ENCODE measurements at regions of chr3 and their contacts with region 1.

Region 1: DNA sequence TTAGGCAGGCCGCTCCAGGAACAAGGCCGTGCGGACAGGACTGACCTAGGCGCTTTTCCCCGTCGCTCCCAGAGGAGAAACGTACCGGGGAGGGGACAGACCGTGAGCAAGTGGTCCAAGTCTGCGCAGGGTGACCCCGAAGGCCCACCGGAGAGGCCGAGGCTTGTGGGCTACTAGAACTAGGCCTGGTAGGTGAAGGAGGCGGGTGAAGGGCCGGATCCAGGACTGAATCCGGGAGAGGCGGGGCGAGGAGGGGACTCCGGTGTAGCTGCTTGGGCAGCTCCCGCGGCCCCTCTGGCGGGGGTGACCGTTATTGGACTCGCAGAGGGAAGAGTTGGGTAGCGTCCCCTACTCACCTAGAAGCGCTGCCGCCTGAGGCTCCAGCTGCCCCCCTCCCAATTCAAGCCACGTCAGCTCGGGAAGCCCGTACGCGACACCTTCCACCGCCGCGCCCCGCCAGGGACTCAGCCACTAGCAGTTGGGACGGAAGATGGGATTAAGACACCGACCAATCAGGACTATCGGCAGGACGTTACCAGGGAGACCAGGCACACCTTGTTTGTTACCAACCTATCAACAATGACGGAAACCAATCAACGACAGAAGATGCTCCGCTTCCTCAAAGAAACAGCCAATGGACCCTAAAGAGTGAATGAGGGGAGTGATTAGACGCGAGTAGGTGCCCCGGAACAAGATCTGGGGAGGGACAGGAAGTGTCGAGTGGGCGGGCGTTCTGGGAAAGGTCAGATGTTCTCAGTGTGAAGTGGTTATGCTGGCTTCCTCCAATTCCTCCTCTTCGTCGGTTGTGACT is at the start of gene GOLGB1:
- DNase-seq: peak; percentile 92 to 96 (median 94)
- ATAC-seq: peak; percentile 99
- H3K4me3 ChIP-seq: peak within 1 kb of the TSS; percentile 68 to 95 (median 86)
- H3K27ac ChIP-seq: peak within 1 kb of the TSS; percentile 81 to 96 (median 92)
- H3K4me1 ChIP-seq: peaks cover 0 to 49% (median 36%) of the 10 kb centered on the region in 12 donors
- H3K27me3 ChIP-seq: no peaks in the 10 kb centered on the region
- CTCF ChIP-seq: peak in 2 of 12 donors; percentile 6 to 18
- POLR2A ChIP-seq: peak; percentile 75 to 99
- total RNA-seq, gene GOLGB1: 28.5 to 90.9 (median 44.9) TPM

Region 2: GRCh38 chr3:121630355-121630754 is 119.1 kb before region 1 on chr3:
- intact Hi-C with region 1: loop called in 1 of 10 experiments (anchors 1 kb)
- DNase-seq: no peak
- ATAC-seq: no peak
- H3K4me3 ChIP-seq: no peak overlapping the region
- H3K27ac ChIP-seq: peak overlapping the region in 5 of 12 donors; percentile 6 to 70 (median 62)
- H3K4me1 ChIP-seq: peaks cover 0 to 31% (median 7%) of the 10 kb centered on the region in 12 donors
- H3K27me3 ChIP-seq: no peaks in the 10 kb centered on the region
- CTCF ChIP-seq: no peak
- POLR2A ChIP-seq: no peak

Region 3: DNA sequence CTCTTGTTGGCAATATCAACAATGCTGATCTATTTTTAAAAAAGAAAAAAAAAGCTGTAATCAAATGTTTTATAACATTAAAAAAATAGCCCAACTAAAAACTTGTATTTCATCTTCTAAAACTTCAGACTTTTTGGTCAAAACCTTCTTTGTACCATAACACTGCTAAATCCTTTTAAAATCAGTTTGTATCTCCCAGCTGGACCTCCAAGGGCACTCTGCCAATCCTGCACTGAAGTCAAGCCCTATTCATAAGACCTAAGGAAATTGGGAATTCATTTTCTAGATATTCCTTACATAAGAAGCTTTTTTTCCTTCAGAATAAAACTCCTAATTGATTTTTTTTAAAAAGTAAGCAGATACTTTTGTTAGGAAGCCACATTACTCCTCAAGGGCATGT is 50.6 kb before region 1 on chr3:
- intact Hi-C with region 1: no loop called
- DNase-seq: peak in 3 of 5 donors; percentile 22 to 41 (median 25)
- ATAC-seq: peak in 1 of 4 donors; percentile 20
- H3K4me3 ChIP-seq: no peak overlapping the region
- H3K27ac ChIP-seq: peak overlapping the region in 9 of 12 donors; percentile 6 to 67 (median 43)
- H3K4me1 ChIP-seq: peaks cover 0 to 45% (median 24%) of the 10 kb centered on the region in 12 donors
- H3K27me3 ChIP-seq: no peaks in the 10 kb centered on the region
- CTCF ChIP-seq: no peak
- POLR2A ChIP-seq: no peak

Region 4: DNA sequence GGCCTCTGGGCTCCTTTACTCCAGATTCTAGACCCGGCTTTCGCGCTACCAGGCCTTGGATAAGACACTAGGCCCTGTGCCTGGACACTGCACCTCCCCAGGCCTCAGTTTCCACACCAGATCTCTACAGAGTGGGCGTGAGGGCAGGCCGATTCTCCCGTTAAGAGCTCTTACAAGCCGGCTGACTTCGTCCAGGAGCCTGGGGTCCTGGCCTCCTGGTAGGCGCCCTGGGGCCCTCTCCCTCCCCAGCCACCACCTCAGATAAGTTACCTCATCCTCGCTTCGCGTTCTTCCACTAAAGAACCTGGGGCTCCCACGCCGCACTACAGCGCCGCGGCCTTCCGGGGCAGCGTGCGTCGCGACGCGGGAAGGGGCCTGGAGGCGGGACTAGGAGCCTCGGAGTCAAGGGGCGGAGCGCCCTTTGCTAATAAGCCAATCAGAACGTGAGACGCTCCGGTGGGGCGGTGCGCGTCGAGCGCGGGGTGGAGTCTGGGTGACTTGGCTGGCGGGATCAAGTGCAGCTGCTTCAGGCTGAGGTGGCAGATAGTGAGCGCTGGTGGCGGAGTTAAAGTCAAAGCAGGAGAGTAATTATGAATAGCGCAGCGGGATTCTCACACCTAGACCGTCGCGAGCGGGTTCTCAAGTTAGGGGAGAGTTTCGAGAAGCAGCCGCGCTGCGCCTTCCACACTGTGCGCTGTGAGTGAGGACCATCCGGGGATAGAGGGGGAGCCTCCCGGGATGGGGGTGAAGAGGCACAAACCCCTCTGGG is 85.4 kb after region 1 on chr3 and contains the starts of genes EAF2 and IQCB1:
- intact Hi-C with region 1: loop called in 1 of 10 experiments (anchors 5 kb)
- DNase-seq: peak; percentile 95 to 98 (median 97)
- ATAC-seq: peak; percentile 100
- H3K4me3 ChIP-seq: peak within 1 kb of the TSS; percentile 65 to 88 (median 78)
- H3K27ac ChIP-seq: peak within 1 kb of the TSS in 11 of 12 donors; percentile 45 to 88 (median 79)
- H3K4me1 ChIP-seq: peaks cover 0 to 27% (median 11%) of the 10 kb centered on the region in 12 donors
- H3K27me3 ChIP-seq: no peaks in the 10 kb centered on the region
- CTCF ChIP-seq: peak in 1 of 12 donors; percentile 10
- POLR2A ChIP-seq: peak; percentile 63 to 97
- total RNA-seq, gene EAF2: 0.95 to 6.3 (median 3.7) TPM
- total RNA-seq, gene IQCB1: 5.3 to 10.3 (median 6.6) TPM

Region 5: GRCh38 chr3:122383771-122384697 is 634.6 kb after region 1 on chr3 and contains the start of gene FAM162A:
- intact Hi-C with region 1: loop called in 1 of 10 experiments (anchors 10 kb)
- DNase-seq: peak; percentile 94 to 97 (median 96)
- ATAC-seq: peak; percentile 97 to 98 (median 98)
- H3K4me3 ChIP-seq: peak within 1 kb of the TSS; percentile 63 to 94 (median 72)
- H3K27ac ChIP-seq: peak within 1 kb of the TSS; percentile 49 to 94 (median 90)
- H3K4me1 ChIP-seq: peaks cover 0 to 44% (median 12%) of the 10 kb centered on the region in 12 donors
- H3K27me3 ChIP-seq: no peaks in the 10 kb centered on the region
- CTCF ChIP-seq: peak; percentile 35 to 89 (median 57)
- POLR2A ChIP-seq: peak in 1 of 2 donors; percentile 95
- total RNA-seq, gene FAM162A: 46.7 to 135 (median 108) TPM

Measured in heart left ventricle (tissue), 16 donors.